ENCODE measurements at regions of chr3 and their contacts with region 1.

Region 1: GRCh38 chr3:173221010-173221409 is 80.0 kb upstream of the SPATA16 start:
- DNase-seq: peak; percentile 32
- H3K4me3 Mint-ChIP-seq: no peak overlapping the region
- H3K27ac Mint-ChIP-seq: no peak overlapping the region
- H3K4me1 Mint-ChIP-seq: peaks cover 11% of the 10 kb centered on the region
- H3K27me3 Mint-ChIP-seq: no peaks in the 10 kb centered on the region
- CTCF ChIP-seq: peak; percentile 85

Region 2: DNA sequence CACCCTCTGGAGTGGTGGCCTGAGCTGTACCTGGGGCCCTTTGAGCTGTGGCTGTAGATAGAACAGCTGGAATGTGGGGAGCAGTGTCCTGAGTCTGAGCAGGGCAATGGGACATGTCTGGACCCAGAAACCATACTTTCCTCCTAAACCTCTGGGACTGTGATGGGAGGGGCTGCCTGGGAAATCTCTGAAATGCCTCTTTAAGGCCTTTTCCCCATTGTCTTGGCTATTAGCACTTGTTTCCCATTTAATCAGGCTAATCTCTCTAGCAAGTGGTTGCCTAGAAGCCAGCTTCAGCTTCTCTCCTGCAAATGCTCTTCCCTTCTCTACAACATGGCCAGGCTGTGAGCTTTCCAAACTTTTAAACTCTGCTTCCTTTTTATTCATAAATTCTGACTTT is 21.4 kb before region 1 on chr3:
- CTCF ChIA-PET with region 1: no interaction called
- intact Hi-C with region 1: no loop called
- DNase-seq: no peak
- H3K4me3 Mint-ChIP-seq: no peak overlapping the region
- H3K27ac Mint-ChIP-seq: no peak overlapping the region
- H3K4me1 Mint-ChIP-seq: no peaks in the 10 kb centered on the region
- H3K27me3 Mint-ChIP-seq: no peaks in the 10 kb centered on the region
- CTCF ChIP-seq: no peak

Region 3: DNA sequence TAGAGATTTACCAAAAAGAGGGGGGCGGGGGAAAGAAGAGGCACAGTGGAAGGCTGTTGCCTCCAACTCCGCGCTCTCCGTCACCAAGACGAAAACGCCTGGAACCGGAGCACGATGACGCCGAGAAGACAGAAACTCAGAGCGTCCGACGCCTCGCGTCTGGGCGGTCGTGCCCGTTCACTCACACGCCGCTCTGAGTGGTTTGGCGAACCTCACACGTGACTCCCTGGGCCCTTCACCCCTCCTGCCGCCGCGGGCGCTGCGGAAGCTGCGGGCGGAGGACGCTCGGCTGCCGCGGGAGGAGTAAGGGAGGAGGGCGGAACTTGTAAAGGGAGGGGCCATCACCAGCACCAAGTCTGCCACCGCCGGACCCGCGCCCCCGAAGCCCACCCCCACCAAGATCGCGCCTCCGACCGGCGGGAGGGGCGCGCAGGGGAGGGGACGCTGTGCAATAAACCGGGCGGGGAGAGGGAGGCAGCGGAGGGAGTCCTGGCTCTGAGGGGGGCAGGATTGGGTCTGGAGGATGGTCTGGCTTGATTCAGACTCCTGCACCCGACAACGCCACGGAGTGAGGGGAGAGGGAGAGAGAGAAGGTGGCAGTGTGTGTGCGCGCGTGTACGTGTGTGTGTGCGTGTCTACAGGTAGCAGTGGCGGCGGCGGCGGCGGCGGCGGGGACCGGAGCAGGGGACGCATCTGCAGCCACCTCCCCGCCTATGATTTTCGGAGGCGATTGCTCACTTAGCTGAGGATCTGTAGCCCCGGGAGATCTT is 174.6 kb after region 1 on chr3:
- CTCF ChIA-PET with region 1: no interaction called
- intact Hi-C with region 1: loop called (anchors 5 kb)
- DNase-seq: peak; percentile 88
- H3K4me3 Mint-ChIP-seq: peak overlapping the region; percentile 77
- H3K27ac Mint-ChIP-seq: peak overlapping the region; percentile 95
- H3K4me1 Mint-ChIP-seq: peaks cover 23% of the 10 kb centered on the region
- H3K27me3 Mint-ChIP-seq: peaks cover 28% of the 10 kb centered on the region
- CTCF ChIP-seq: no peak

Region 4: DNA sequence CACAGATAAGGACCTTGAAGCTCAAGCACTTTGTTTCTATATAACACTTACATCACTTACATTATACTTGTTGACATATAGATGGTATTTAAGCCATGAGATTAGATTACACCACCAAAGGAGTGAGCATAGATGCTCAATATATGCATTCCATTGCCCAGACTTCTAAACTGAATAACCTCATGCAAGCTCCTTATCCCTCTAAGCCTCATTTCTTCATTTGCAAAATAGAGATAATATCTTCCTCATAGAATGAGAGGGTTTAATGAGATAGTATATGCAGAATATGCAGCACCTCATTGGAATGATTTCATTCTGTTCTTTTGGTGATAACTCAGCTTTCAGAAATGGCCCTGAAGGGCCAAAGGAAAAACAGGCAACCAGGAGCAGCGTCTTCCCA is 195.1 kb after region 1 on chr3:
- CTCF ChIA-PET with region 1: no interaction called
- intact Hi-C with region 1: no loop called
- DNase-seq: no peak
- H3K4me3 Mint-ChIP-seq: no peak overlapping the region
- H3K27ac Mint-ChIP-seq: no peak overlapping the region
- H3K4me1 Mint-ChIP-seq: no peaks in the 10 kb centered on the region
- H3K27me3 Mint-ChIP-seq: no peaks in the 10 kb centered on the region
- CTCF ChIP-seq: no peak

Measured in Calu3 (cell line).